ENCODE measurements at regions of chr17 and their contacts with region 1.

Region 1: DNA sequence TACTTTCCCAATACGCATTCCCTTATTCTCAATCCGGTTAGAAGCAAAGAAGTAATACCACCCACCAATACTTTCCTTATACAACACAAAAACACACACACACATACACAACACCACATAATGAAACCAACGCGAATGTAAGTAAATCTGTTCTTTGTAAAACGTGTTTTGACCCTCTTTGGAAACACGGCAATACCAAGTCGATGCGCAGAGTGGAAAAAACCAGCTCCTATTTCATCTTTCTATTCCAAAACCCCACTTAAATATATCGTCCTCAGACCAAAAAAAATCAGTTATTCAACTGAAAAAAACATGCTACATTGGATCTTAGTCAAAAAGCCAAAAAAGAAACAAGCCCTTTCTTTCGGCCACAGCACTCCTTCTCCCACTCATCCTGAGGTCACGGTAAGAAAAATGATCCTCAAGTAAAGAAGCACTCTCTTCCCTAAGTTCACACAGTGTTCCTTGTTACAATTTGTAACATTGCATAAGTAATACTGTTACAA is 31.0 kb upstream of the ARL4D start:
- DNase-seq: peak; percentile 91
- ATAC-seq: peak; percentile 37
- H3K4me3 ChIP-seq: peak overlapping the region; percentile 43 to 73 (median 58); a peak in 4 of 6 replicates
- H3K27ac ChIP-seq: peak overlapping the region; percentile 95
- H3K4me1 ChIP-seq: peaks cover 73% of the 10 kb centered on the region
- H3K27me3 ChIP-seq: no peaks in the 10 kb centered on the region; a peak in 1 of 5 replicates
- CTCF ChIP-seq: no peak
- EP300 ChIP-seq: peak in 1 of 2 experiments; percentile 65; a peak in 2 of 4 replicates
- POLR2A ChIP-seq: peak; percentile 98 to 100
- RAD21 ChIP-seq: peak; percentile 59; the same call in 1 of the 2 replicates

Region 2: GRCh38 chr17:43134774-43135453 is 232.9 kb before region 1 on chr17:
- CTCF ChIA-PET with region 1: no interaction called
- POLR2A ChIA-PET with region 1: no interaction called
- in situ Hi-C with region 1: no loop called
- intact Hi-C with region 1: no loop called
- DNase-seq: peak; percentile 92
- ATAC-seq: peak; percentile 98
- H3K4me3 ChIP-seq: peak overlapping the region in 1 of 3 experiments; percentile 18; a peak in 2 of 6 replicates
- H3K27ac ChIP-seq: peak overlapping the region; percentile 79
- H3K4me1 ChIP-seq: peaks cover 54% of the 10 kb centered on the region
- H3K27me3 ChIP-seq: no peaks in the 10 kb centered on the region
- CTCF ChIP-seq: no peak
- EP300 ChIP-seq: peak; percentile 36 to 85; a peak in 2 of 4 replicates
- POLR2A ChIP-seq: peak; percentile 44 to 58; a peak in 3 of 4 replicates
- RAD21 ChIP-seq: peak; percentile 51

Region 3: DNA sequence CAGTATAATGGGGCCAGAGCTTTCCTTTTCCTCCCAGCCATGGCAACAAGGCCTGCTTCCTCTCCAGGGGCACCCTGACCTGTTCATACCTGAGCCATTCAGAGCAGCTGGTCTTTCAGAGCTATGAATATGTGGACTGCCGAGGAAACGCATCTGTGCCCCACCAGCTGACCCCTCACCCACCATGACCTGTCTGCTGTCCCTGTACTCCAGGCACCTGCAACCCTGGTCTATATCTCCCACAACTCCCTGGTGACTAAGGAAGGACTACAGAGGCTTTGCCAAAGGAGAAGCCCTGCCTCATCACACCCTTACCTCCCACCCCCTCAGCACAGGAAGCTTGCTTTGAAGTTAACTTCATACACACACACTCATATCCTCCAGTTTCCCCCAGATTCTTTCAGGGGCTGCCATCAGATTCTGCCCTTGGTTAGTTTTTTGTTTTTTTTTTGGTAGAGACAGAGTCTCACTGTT is 150.1 kb before region 1 on chr17:
- CTCF ChIA-PET with region 1: no interaction called
- POLR2A ChIA-PET with region 1: interaction called, 19 read pairs
- in situ Hi-C with region 1: no loop called
- intact Hi-C with region 1: no loop called
- DNase-seq: no peak
- ATAC-seq: peak; percentile 3; the same call in 2 of the 3 replicates
- H3K4me3 ChIP-seq: no peak overlapping the region
- H3K27ac ChIP-seq: peak overlapping the region; percentile 94
- H3K4me1 ChIP-seq: peaks cover 70% of the 10 kb centered on the region
- H3K27me3 ChIP-seq: no peaks in the 10 kb centered on the region
- CTCF ChIP-seq: no peak
- EP300 ChIP-seq: no peak
- POLR2A ChIP-seq: no peak; a peak in 1 of 4 replicates
- RAD21 ChIP-seq: no peak

Region 4: GRCh38 chr17:43388359-43389045 is 20.7 kb after region 1 on chr17:
- CTCF ChIA-PET with region 1: interaction called, 14 read pairs
- POLR2A ChIA-PET with region 1: interaction called, 386 read pairs
- in situ Hi-C with region 1: no loop called
- intact Hi-C with region 1: loop called (anchors 1 kb)
- DNase-seq: peak; percentile 81
- ATAC-seq: peak; percentile 71
- H3K4me3 ChIP-seq: peak overlapping the region; percentile 63 to 78 (median 70)
- H3K27ac ChIP-seq: peak overlapping the region; percentile 86
- H3K4me1 ChIP-seq: peaks cover 81% of the 10 kb centered on the region
- H3K27me3 ChIP-seq: no peaks in the 10 kb centered on the region
- CTCF ChIP-seq: peak; percentile 19; the same call in 1 of the 2 replicates
- EP300 ChIP-seq: no peak
- POLR2A ChIP-seq: peak; percentile 85 to 96
- RAD21 ChIP-seq: 0 out of 2 replicates have a peak, but pooled peaks have one; percentile 21

Region 5: DNA sequence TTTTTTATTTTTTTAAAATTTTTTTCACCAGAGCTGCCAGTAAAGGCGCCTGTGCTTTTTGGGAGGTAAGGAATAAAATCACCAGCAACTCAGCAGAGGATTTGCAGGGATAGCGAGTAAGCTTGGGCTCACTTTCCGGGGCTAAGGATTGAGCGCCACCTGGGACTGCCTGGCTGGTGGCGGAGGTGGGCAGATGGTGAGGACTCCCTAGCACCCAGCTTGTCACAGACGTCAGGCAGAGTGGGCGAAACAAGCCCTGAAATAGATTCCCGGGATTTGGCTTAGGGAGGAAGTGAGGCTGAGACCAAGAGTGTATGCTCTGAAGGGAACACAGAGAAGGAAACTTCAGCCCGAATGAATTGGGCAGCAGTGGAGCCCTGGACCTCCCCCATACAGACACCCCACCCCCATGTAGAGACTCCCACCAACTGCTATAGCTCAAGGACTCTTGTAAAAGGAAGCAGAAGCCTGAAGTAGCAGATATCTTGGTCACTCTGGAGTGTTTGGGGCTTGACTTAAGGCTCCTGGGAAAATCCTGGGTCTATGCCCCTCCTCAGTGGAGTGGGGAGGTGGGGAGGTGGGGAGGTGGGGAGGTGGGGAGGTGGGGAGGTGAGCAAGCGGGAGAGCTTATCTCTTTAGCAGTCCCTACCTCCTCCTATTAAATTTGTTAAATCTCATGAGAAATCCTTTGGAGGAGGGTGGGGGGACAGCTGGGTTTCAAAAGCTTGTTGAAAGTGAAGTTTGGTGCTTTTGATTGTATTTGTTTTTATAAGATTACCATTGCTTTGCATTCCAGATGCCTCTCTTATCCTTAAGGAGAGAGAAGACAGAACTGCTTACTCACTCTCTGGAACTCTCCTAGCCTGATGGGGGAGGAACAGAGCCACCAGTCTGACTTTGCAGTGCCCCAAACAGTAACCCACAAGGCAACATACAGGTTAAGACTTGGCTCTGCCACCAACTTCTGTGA is 39.2 kb after region 1 on chr17:
- CTCF ChIA-PET with region 1: no interaction called
- POLR2A ChIA-PET with region 1: interaction called, 130 read pairs
- in situ Hi-C with region 1: no loop called
- intact Hi-C with region 1: no loop called
- DNase-seq: no peak
- ATAC-seq: no peak
- H3K4me3 ChIP-seq: no peak overlapping the region
- H3K27ac ChIP-seq: no peak overlapping the region
- H3K4me1 ChIP-seq: peaks cover 64% of the 10 kb centered on the region
- H3K27me3 ChIP-seq: no peaks in the 10 kb centered on the region
- CTCF ChIP-seq: no peak
- EP300 ChIP-seq: no peak
- POLR2A ChIP-seq: no peak
- RAD21 ChIP-seq: no peak

Region 6: DNA sequence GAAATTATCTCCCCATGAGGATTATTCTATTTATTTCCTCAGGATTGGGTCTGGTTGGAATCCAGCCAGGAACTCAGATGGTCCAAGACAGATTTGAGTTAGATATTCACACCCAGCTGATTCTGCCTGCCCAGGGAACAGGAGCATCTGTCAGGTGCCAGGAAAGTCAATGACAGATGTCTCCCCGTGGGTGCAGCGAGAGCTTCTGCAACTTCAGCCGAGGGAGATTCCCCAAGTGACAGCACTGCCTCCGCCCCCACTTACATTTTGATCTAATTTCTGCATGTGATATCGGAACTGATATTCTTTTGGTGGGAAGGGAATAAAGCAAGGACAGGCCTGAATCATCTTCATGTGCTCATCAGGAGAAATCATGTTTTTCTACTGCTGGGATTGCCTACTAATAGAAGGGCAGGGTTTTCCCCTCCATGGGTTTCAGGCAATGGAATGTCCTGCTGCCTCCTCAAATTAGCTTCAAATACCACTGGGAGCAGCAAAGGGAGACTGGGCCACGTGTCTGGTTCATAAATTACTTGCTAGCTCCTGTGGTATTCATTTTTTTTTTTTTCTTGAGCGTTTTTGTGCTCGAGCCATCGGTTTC is 100.3 kb after region 1 on chr17:
- CTCF ChIA-PET with region 1: no interaction called
- POLR2A ChIA-PET with region 1: interaction called, 37 read pairs
- in situ Hi-C with region 1: no loop called
- intact Hi-C with region 1: no loop called
- DNase-seq: no peak
- ATAC-seq: no peak
- H3K4me3 ChIP-seq: no peak overlapping the region
- H3K27ac ChIP-seq: peak overlapping the region; percentile 94
- H3K4me1 ChIP-seq: peaks cover 79% of the 10 kb centered on the region
- H3K27me3 ChIP-seq: no peaks in the 10 kb centered on the region
- CTCF ChIP-seq: no peak
- EP300 ChIP-seq: no peak
- POLR2A ChIP-seq: no peak
- RAD21 ChIP-seq: no peak

Region 7: GRCh38 chr17:43530278-43531081 is 162.7 kb after region 1 on chr17:
- CTCF ChIA-PET with region 1: no interaction called
- POLR2A ChIA-PET with region 1: interaction called, 26 read pairs
- in situ Hi-C with region 1: no loop called
- intact Hi-C with region 1: no loop called
- DNase-seq: peak; percentile 100
- ATAC-seq: peak; percentile 74
- H3K4me3 ChIP-seq: peak overlapping the region in 2 of 3 experiments; percentile 26 to 58; a peak in 4 of 6 replicates
- H3K27ac ChIP-seq: peak overlapping the region; percentile 96
- H3K4me1 ChIP-seq: peaks cover 97% of the 10 kb centered on the region
- H3K27me3 ChIP-seq: no peaks in the 10 kb centered on the region
- CTCF ChIP-seq: peak; percentile 31; the same call in 1 of the 2 replicates
- EP300 ChIP-seq: peak; percentile 97 to 98
- POLR2A ChIP-seq: peak; percentile 82 to 93
- RAD21 ChIP-seq: peak; percentile 45

Region 8: DNA sequence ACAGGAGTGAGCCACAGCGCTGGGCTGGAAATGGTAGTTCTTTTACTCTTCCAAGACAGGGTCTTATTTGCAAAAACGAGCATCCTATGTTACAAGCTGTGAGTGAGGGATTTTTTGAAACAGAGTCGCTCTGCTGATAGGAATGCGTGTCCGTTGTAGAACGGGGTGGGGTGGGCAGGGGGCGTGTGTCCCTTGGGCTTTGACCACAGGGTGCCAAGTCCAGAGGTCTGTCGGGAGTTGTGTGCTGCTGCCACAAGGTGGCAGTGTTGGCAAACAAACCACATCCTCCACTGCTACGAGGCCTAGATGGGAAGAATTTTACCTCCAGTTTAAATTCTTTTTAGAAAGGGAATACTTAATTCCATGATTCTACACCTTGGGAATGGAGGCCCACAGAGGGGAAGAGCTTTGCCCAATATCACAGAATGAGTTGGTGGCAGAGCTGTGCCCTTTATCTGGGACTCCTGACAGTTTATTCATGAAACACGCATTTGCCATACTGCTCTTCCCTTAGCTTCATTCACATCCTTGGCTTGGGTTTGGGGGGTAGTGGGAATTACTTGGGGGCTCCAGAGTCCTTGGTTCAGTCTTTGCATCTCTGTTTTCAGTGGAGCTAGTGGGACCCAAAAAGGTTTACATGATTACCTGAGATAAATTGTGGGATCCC is 208.9 kb after region 1 on chr17:
- CTCF ChIA-PET with region 1: no interaction called
- POLR2A ChIA-PET with region 1: interaction called, 19 read pairs
- in situ Hi-C with region 1: no loop called
- intact Hi-C with region 1: no loop called
- DNase-seq: peak; percentile 88
- ATAC-seq: peak; percentile 73
- H3K4me3 ChIP-seq: peak overlapping the region in 1 of 3 experiments; percentile 30; a peak in 1 of 6 replicates
- H3K27ac ChIP-seq: peak overlapping the region; percentile 45
- H3K4me1 ChIP-seq: peaks cover 99% of the 10 kb centered on the region
- H3K27me3 ChIP-seq: no peaks in the 10 kb centered on the region
- CTCF ChIP-seq: peak; percentile 99
- EP300 ChIP-seq: peak; percentile 51 to 64; a peak in 3 of 4 replicates
- POLR2A ChIP-seq: no peak
- RAD21 ChIP-seq: peak; percentile 99